CD8-positive, alpha-beta memory T cell (primary cell): ENCODE measurements at regions of chr14 and their contacts with region 1.

Region 1: GRCh38 chr14:99266181-99267178 is 5.5 kb downstream of the BCL11B start:
- DNase-seq: peak; percentile 83 to 90 (median 85)
- H3K4me3 ChIP-seq: peak overlapping the region; percentile 86
- H3K4me3 Mint-ChIP-seq: peak overlapping the region; percentile 77 to 100 (median 99)
- H3K27ac ChIP-seq: peak overlapping the region; percentile 89
- H3K27ac Mint-ChIP-seq: peak overlapping the region; percentile 78 to 100 (median 100)
- H3K4me1 ChIP-seq: peaks cover 43% of the 10 kb centered on the region
- H3K4me1 Mint-ChIP-seq: peaks cover 61 to 68% (median 66%) of the 10 kb centered on the region in 3 donors
- H3K27me3 ChIP-seq: no peaks in the 10 kb centered on the region
- H3K27me3 Mint-ChIP-seq: peaks cover 0 to 12% of the 10 kb centered on the region in 2 donors

Region 2: GRCh38 chr14:98138666-98139065 is 1127.8 kb before region 1 on chr14:
- CTCF ChIA-PET with region 1: interaction called, 71 read pairs
- POLR2A ChIA-PET with region 1: interaction called, 5 read pairs
- DNase-seq: peak; percentile 37 to 82 (median 62)
- H3K4me3 ChIP-seq: peak overlapping the region; percentile 37
- H3K4me3 Mint-ChIP-seq: peak overlapping the region; percentile 70 to 85 (median 77)
- H3K27ac ChIP-seq: no peak overlapping the region
- H3K27ac Mint-ChIP-seq: peak overlapping the region; percentile 40 to 94 (median 84)
- H3K4me1 ChIP-seq: peaks cover 84% of the 10 kb centered on the region
- H3K4me1 Mint-ChIP-seq: peaks cover 79 to 97% (median 92%) of the 10 kb centered on the region in 3 donors
- H3K27me3 ChIP-seq: no peaks in the 10 kb centered on the region
- H3K27me3 Mint-ChIP-seq: no peaks in the 10 kb centered on the region

Region 3: DNA sequence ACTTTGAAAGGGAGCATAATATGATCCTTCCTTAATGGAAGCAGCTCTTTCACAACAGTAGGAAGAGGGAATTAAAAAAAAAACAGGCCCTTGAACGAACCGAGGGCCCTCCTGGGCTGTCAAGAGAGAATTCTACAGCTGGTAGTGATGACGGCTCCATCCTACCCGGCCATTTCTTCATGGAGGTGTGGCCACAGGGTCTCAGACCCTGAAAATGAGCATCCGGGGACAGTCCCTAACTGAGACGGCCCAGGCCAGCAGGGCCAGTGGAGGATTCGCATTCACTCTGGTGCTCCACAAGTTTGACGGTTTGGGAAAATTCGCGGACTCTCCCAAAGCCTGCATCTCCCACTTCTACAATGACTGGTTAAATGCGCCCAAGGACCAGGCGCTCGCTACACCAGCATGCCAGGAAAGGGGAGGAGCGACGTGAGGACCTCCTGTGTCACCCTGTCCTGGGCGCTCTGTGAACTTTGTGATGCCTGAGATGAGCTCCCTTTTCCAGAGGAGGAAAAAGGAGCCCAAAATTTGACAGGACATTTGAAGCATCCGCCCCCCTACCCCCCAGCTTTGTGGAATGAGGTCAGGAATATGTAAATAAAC is 61.3 kb before region 1 on chr14:
- CTCF ChIA-PET with region 1: interaction called, 17 read pairs
- POLR2A ChIA-PET with region 1: interaction called, 3 read pairs
- DNase-seq: no peak
- H3K4me3 ChIP-seq: peak overlapping the region; percentile 41
- H3K4me3 Mint-ChIP-seq: peak overlapping the region; percentile 9 to 84 (median 80)
- H3K27ac ChIP-seq: no peak overlapping the region
- H3K27ac Mint-ChIP-seq: peak overlapping the region; percentile 82 to 98 (median 94)
- H3K4me1 ChIP-seq: peaks cover 100% of the 10 kb centered on the region
- H3K4me1 Mint-ChIP-seq: peaks cover 95 to 100% (median 97%) of the 10 kb centered on the region in 3 donors
- H3K27me3 ChIP-seq: no peaks in the 10 kb centered on the region
- H3K27me3 Mint-ChIP-seq: peaks cover 0 to 2% of the 10 kb centered on the region in 2 donors

Region 4: GRCh38 chr14:99224116-99224910 is 42.2 kb before region 1 on chr14:
- CTCF ChIA-PET with region 1: interaction called, 532 read pairs
- POLR2A ChIA-PET with region 1: interaction called, 25 read pairs
- DNase-seq: no peak
- H3K4me3 ChIP-seq: peak overlapping the region; percentile 14
- H3K4me3 Mint-ChIP-seq: peak overlapping the region in 6 of 7 donors; percentile 43 to 82 (median 68)
- H3K27ac ChIP-seq: no peak overlapping the region
- H3K27ac Mint-ChIP-seq: peak overlapping the region; percentile 92 to 100 (median 99)
- H3K4me1 ChIP-seq: peaks cover 96% of the 10 kb centered on the region
- H3K4me1 Mint-ChIP-seq: peaks cover 93 to 97% (median 97%) of the 10 kb centered on the region in 3 donors
- H3K27me3 ChIP-seq: no peaks in the 10 kb centered on the region
- H3K27me3 Mint-ChIP-seq: peaks cover 0 to 4% of the 10 kb centered on the region in 2 donors

Region 5: DNA sequence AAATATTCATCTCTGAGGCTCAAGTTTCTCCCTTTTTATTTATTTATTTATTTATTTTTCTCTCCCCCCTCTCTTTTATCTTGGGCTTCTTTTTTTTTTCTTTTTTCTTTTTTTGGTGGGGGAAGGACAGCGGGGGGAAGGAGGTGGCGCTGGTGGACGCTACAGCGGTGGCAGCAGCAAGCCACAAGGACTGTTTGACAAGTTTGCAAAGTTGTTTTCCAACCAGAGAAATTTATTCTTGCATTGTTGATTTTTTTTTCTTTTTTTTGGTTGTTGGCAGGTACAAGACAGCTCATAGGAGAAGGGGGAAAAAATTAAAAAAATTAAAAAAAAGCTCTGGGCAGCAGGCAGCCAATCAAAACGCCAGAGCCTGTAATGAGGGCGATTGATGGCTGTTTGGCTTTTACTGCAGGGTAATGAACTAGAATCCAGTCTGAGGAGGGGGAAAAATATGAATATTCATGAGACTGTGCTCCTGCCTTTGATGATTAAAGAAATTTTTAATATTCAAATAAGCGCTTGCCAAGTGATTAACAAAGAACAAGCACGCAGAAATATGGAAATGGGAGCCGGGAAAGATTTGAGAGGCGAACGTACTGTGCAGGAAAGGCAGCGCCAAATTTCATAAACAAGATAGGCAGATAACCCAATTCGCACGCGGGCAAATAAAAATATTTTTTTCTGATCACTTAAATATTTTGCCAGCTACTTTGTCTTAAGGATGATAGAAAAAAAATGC is 30.7 kb before region 1 on chr14:
- CTCF ChIA-PET with region 1: interaction called, 532 read pairs
- POLR2A ChIA-PET with region 1: interaction called, 103 read pairs
- DNase-seq: peak in 1 of 5 donors; percentile 54
- H3K4me3 ChIP-seq: peak overlapping the region; percentile 56
- H3K4me3 Mint-ChIP-seq: peak overlapping the region; percentile 84 to 94 (median 87)
- H3K27ac ChIP-seq: peak overlapping the region; percentile 28
- H3K27ac Mint-ChIP-seq: peak overlapping the region; percentile 90 to 100 (median 99)
- H3K4me1 ChIP-seq: peaks cover 97% of the 10 kb centered on the region
- H3K4me1 Mint-ChIP-seq: peaks cover 94 to 98% (median 95%) of the 10 kb centered on the region in 3 donors
- H3K27me3 ChIP-seq: no peaks in the 10 kb centered on the region
- H3K27me3 Mint-ChIP-seq: peaks cover 0 to 2% of the 10 kb centered on the region in 2 donors

Region 6: GRCh38 chr14:99252940-99253868 is 13.3 kb before region 1 on chr14:
- CTCF ChIA-PET with region 1: interaction called, 532 read pairs
- POLR2A ChIA-PET with region 1: interaction called, 22 read pairs
- DNase-seq: peak in 3 of 5 donors; percentile 75 to 78 (median 75)
- H3K4me3 ChIP-seq: peak overlapping the region; percentile 44
- H3K4me3 Mint-ChIP-seq: peak overlapping the region; percentile 84 to 99 (median 92)
- H3K27ac ChIP-seq: peak overlapping the region; percentile 28
- H3K27ac Mint-ChIP-seq: peak overlapping the region; percentile 95 to 100 (median 100)
- H3K4me1 ChIP-seq: peaks cover 100% of the 10 kb centered on the region
- H3K4me1 Mint-ChIP-seq: peaks cover 93 to 99% (median 98%) of the 10 kb centered on the region in 3 donors
- H3K27me3 ChIP-seq: no peaks in the 10 kb centered on the region
- H3K27me3 Mint-ChIP-seq: no peaks in the 10 kb centered on the region

Region 7: DNA sequence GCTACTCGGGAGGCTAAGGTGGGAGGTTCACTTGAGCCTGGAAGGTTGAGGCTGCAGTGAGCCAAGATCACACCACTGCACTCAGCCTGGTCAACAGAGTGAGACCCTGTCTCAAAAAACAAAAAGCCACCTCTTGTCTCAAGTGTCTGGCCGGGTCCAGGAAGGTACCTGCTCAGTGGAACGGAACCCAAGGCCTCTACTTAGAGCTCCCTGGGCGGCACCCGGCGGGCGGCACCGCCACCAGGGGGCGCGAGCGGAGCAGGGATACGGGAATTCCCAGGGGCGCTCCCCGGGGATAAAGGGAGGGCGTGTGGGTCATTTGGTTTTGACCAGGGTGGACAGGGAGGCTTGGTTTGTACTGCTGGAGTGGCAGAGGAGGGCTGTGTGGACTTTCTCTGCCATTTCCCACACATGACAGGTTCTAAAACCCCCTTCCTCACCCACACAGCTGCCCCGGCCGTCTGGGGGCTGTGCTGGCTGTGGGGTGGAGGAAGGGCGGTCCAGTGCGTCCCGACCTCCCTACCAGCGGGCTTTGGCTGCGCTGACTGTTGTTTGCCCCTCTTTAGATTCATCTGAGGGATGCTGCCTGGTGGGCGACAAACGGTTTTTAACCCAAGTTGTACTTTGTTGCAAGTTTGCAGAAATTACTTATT is 122.8 kb after region 1 on chr14:
- CTCF ChIA-PET with region 1: no interaction called
- POLR2A ChIA-PET with region 1: no interaction called
- DNase-seq: peak in 3 of 5 donors; percentile 4 to 17 (median 15)
- H3K4me3 ChIP-seq: no peak overlapping the region
- H3K4me3 Mint-ChIP-seq: no peak overlapping the region
- H3K27ac ChIP-seq: no peak overlapping the region
- H3K27ac Mint-ChIP-seq: peak overlapping the region in 1 of 8 donors; percentile 61
- H3K4me1 ChIP-seq: peaks cover 8% of the 10 kb centered on the region
- H3K4me1 Mint-ChIP-seq: peaks cover 16 to 27% (median 21%) of the 10 kb centered on the region in 3 donors
- H3K27me3 ChIP-seq: peaks cover 3% of the 10 kb centered on the region
- H3K27me3 Mint-ChIP-seq: peaks cover 5 to 15% of the 10 kb centered on the region in 2 donors